ENCODE measurements at regions of chr2 and their contacts with region 1.

Region 1: DNA sequence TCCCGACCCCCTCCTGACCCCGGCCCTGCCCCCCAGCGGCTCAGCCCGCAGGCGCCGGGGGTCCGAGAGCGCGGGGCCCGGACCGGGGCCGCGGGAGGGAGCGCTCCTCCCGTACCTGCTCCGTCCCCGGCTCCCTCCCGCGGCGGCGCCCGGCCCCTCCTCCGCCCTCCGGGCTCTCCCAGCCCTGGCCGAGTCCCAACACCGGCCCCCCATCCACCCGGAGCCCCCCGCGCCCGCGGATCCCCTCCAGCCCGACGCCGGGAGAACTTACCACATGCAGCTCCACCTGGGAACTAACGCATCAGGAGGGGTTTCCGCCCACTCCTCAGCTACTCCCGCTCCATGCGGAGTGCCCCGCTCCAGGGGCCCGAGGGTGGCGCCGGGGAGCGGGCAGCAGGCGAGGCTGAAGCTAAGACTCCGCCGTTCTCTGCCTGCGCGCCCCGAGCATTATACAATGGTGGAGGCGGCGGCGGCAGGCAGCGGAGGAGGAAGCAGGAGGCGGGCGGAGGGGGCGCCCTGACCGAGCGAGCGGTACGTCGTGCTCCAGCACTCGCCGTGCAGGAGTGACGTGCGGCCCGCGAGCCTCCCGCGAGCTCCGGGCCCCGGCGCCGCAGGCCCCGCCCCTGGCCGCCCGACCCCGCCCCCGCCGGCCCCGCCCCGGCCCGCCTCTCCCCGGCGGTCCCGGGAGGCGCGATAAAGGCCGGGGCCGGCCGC is at the start of gene SERTAD2:
- DNase-seq: no peak
- ATAC-seq: peak; percentile 70
- H3K4me3 ChIP-seq: peak within 1 kb of the TSS; percentile 95
- H3K27ac ChIP-seq: peak within 1 kb of the TSS; percentile 81
- H3K4me1 ChIP-seq: peaks cover 51% of the 10 kb centered on the region
- H3K27me3 ChIP-seq: no peaks in the 10 kb centered on the region
- CTCF ChIP-seq: 0 out of 6 replicates have a peak, but pooled peaks of 1 of the 3 experiments have one; percentile 6
- EP300 ChIP-seq: no peak
- POLR2A ChIP-seq: peak; percentile 90
- RAD21 ChIP-seq: 0 out of 2 replicates have a peak, but pooled peaks have one; percentile 19
- polyA plus RNA-seq, gene SERTAD2: 7.9 TPM

Region 2: GRCh38 chr2:64463781-64464180 is 189.7 kb before region 1 on chr2:
- CTCF ChIA-PET with region 1: no interaction called
- POLR2A ChIA-PET with region 1: no interaction called
- RAD21 ChIA-PET with region 1: no interaction called
- SMC1A ChIA-PET with region 1: no interaction called
- in situ Hi-C with region 1: no loop called
- intact Hi-C with region 1: no loop called
- DNase-seq: no peak
- ATAC-seq: no peak
- H3K4me3 ChIP-seq: no peak overlapping the region
- H3K27ac ChIP-seq: no peak overlapping the region
- H3K4me1 ChIP-seq: no peaks in the 10 kb centered on the region
- H3K27me3 ChIP-seq: no peaks in the 10 kb centered on the region
- CTCF ChIP-seq: no peak
- EP300 ChIP-seq: no peak
- POLR2A ChIP-seq: no peak
- RAD21 ChIP-seq: no peak

Region 3: DNA sequence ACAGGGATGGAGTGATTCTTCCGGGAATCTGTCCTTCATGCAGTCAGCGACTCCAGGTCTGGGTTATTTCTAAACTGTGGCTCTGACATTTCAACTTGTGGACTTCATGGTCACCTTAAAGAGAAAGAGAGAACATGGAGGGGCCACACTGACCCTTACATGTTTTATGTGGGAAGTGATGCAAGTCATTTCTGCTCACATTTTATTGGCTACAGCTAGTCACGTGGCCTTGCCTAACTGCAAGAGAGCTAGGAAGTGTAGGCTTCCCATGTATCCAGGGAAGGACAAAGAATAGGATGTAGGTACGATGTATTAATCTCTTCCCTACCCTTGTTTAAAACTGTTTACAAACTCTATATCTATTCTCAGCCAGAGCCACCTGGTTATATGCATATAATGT is 159.7 kb before region 1 on chr2:
- CTCF ChIA-PET with region 1: no interaction called
- POLR2A ChIA-PET with region 1: no interaction called
- RAD21 ChIA-PET with region 1: no interaction called
- SMC1A ChIA-PET with region 1: no interaction called
- in situ Hi-C with region 1: no loop called
- intact Hi-C with region 1: no loop called
- DNase-seq: no peak
- ATAC-seq: no peak
- H3K4me3 ChIP-seq: no peak overlapping the region
- H3K27ac ChIP-seq: no peak overlapping the region
- H3K4me1 ChIP-seq: no peaks in the 10 kb centered on the region; the same call in 1 of the 2 replicates
- H3K27me3 ChIP-seq: peaks cover 0 to 1% of the 10 kb centered on the region in 2 experiments; a peak in 3 of 4 replicates
- CTCF ChIP-seq: no peak
- EP300 ChIP-seq: no peak
- POLR2A ChIP-seq: no peak
- RAD21 ChIP-seq: no peak

Region 4: DNA sequence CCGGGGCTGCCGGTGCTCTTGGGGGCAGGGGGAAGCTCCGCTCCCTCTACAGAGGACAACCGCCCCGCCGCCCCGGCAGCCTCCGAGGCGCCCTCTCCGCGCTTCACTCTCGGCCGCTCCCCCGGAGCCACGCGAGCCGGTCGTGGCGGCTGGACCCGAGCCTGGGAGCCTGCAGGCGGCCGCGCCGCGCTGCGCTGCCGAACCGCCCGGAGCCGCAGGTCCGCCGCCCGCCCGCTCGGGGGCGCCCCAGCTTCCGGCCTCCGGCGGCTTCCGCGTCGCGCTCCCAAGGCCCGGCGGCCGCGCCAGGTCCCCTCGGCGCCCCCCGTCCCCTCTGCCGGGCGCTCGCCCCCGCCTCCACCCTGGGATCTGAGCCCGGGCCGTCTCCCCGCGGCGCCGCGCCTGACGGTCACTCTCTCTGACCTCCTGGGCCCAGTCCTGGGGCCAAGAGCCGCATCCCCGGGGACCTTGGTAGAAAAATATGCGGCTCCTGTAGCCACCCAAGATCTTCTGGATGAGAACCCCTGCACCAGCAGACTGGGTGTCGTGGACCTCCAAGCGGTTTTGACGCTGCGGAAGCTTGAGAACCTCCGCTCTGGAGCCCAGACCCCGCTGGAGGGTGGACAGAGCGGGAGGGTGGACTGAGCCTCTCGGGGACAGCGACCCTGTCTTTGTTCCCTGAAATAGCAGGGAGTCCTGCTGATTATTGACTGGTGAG is 44.1 kb before region 1 on chr2:
- CTCF ChIA-PET with region 1: interaction called, 16 read pairs
- POLR2A ChIA-PET with region 1: interaction called, 20 read pairs
- RAD21 ChIA-PET with region 1: interaction called, 73 read pairs
- SMC1A ChIA-PET with region 1: interaction called, 8 read pairs
- in situ Hi-C with region 1: no loop called
- intact Hi-C with region 1: no loop called
- DNase-seq: no peak
- ATAC-seq: peak; percentile 62
- H3K4me3 ChIP-seq: peak overlapping the region; percentile 68
- H3K27ac ChIP-seq: peak overlapping the region; percentile 14; the same call in 1 of the 2 replicates
- H3K4me1 ChIP-seq: peaks cover 38% of the 10 kb centered on the region
- H3K27me3 ChIP-seq: no peaks in the 10 kb centered on the region
- CTCF ChIP-seq: peak; percentile 30 to 63 (median 33); a peak in 4 of 6 replicates
- EP300 ChIP-seq: no peak
- POLR2A ChIP-seq: peak; percentile 70
- RAD21 ChIP-seq: peak; percentile 42

Region 5: GRCh38 chr2:64688909-64689308 is 35.4 kb after region 1 on chr2:
- CTCF ChIA-PET with region 1: interaction called, 4 read pairs
- POLR2A ChIA-PET with region 1: interaction called, 14 read pairs
- RAD21 ChIA-PET with region 1: interaction called, 3 read pairs
- SMC1A ChIA-PET with region 1: interaction called, 262 read pairs
- in situ Hi-C with region 1: no loop called
- intact Hi-C with region 1: no loop called
- DNase-seq: no peak
- ATAC-seq: no peak
- H3K4me3 ChIP-seq: no peak overlapping the region
- H3K27ac ChIP-seq: no peak overlapping the region
- H3K4me1 ChIP-seq: no peaks in the 10 kb centered on the region
- H3K27me3 ChIP-seq: no peaks in the 10 kb centered on the region
- CTCF ChIP-seq: no peak
- EP300 ChIP-seq: no peak
- POLR2A ChIP-seq: no peak
- RAD21 ChIP-seq: no peak

Region 6: GRCh38 chr2:64745562-64745961 is 92.1 kb after region 1 on chr2:
- CTCF ChIA-PET with region 1: interaction called, 153 read pairs
- POLR2A ChIA-PET with region 1: interaction called, 195 read pairs
- RAD21 ChIA-PET with region 1: interaction called, 514 read pairs
- SMC1A ChIA-PET with region 1: interaction called, 945 read pairs
- in situ Hi-C with region 1: no loop called
- intact Hi-C with region 1: no loop called
- DNase-seq: no peak
- ATAC-seq: peak; percentile 39
- H3K4me3 ChIP-seq: peak overlapping the region; percentile 46
- H3K27ac ChIP-seq: peak overlapping the region; percentile 10
- H3K4me1 ChIP-seq: no peaks in the 10 kb centered on the region
- H3K27me3 ChIP-seq: no peaks in the 10 kb centered on the region
- CTCF ChIP-seq: no peak
- EP300 ChIP-seq: no peak
- POLR2A ChIP-seq: no peak
- RAD21 ChIP-seq: no peak

Region 7: DNA sequence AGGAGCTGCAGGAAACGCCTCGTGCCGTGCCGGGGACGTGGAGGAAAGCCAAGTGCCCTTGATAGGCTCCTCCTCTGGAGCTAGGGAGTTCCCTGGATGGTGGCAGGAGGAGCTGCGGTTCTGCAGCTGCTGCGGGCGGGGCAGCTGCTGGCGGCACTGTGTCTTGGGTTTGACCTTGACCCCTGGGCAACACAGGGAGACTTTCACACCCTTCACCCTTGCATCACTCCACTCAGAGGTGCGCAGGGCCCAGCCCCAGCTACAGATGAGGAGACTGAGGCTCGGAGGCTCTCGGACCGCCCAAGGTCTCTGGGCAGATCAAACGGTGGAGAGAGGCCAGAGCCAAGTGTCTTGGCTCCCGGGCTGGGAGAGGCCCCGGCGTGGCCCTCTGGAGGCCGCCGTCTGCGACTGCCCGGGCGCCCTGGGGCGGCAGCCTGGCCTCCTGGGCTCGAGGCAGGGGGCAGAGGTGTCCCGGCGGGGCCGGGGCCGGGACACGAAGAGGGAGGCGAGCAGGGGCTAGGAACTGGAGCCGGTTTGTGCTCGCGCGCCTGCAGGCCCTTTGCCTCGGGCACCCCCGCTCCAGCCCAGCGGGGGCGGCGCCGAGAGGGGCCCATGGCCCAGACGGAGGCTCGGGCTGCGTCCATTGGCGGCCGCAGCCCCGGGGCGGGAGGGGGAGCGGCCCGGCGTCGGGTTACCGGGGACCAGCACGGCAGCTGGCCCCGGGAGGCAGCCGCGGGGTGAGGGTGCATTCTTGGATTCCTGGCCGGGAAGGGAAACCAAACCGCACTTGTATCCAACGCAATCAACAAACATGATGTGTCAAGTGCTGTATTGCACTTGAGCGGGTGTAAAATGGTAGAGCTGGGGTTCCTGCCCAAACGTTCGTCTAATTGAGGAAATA is 206.1 kb after region 1 on chr2:
- CTCF ChIA-PET with region 1: interaction called, 9 read pairs
- POLR2A ChIA-PET with region 1: interaction called, 19 read pairs
- RAD21 ChIA-PET with region 1: interaction called, 88 read pairs
- SMC1A ChIA-PET with region 1: interaction called, 39 read pairs
- in situ Hi-C with region 1: no loop called
- intact Hi-C with region 1: no loop called
- DNase-seq: no peak
- ATAC-seq: peak; percentile 53
- H3K4me3 ChIP-seq: peak overlapping the region; percentile 65
- H3K27ac ChIP-seq: peak overlapping the region; percentile 91
- H3K4me1 ChIP-seq: peaks cover 54% of the 10 kb centered on the region
- H3K27me3 ChIP-seq: no peaks in the 10 kb centered on the region
- CTCF ChIP-seq: no peak
- EP300 ChIP-seq: no peak
- POLR2A ChIP-seq: peak; percentile 40
- RAD21 ChIP-seq: no peak

Region 8: GRCh38 chr2:64937687-64938491 is 284.4 kb after region 1 on chr2:
- CTCF ChIA-PET with region 1: no interaction called
- POLR2A ChIA-PET with region 1: interaction called, 6 read pairs
- RAD21 ChIA-PET with region 1: interaction called, 14 read pairs
- SMC1A ChIA-PET with region 1: interaction called, 3 read pairs
- in situ Hi-C with region 1: no loop called
- intact Hi-C with region 1: loop called (anchors 2 kb)
- DNase-seq: peak; percentile 77
- ATAC-seq: peak; percentile 70
- H3K4me3 ChIP-seq: peak overlapping the region; percentile 76
- H3K27ac ChIP-seq: peak overlapping the region; percentile 92
- H3K4me1 ChIP-seq: peaks cover 67% of the 10 kb centered on the region
- H3K27me3 ChIP-seq: no peaks in the 10 kb centered on the region
- CTCF ChIP-seq: no peak
- EP300 ChIP-seq: peak in 1 of 2 experiments; percentile 12; a peak in 1 of 4 replicates
- POLR2A ChIP-seq: peak; percentile 60
- RAD21 ChIP-seq: no peak

Region 9: DNA sequence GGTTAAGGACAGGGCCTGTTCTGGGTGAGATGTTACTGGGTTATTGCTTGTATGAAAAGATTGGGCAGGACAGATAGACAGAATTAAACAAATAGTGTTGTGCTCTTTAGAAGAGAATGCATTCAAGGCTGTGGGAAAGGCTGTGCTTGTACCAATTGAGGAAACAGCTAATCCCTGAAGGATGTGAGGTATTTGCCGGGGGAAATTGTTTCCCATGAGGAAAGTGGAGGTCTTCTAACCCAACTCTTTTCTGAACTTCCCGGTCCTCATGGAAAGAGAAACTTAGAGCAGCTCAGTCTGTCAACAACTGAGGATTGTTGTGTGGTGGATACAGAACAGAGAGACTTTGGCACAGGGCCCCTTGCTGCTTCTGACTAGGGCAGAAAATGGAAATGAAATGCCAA is 345.2 kb after region 1 on chr2:
- CTCF ChIA-PET with region 1: no interaction called
- POLR2A ChIA-PET with region 1: no interaction called
- RAD21 ChIA-PET with region 1: no interaction called
- SMC1A ChIA-PET with region 1: no interaction called
- in situ Hi-C with region 1: no loop called
- intact Hi-C with region 1: no loop called
- DNase-seq: no peak
- ATAC-seq: no peak
- H3K4me3 ChIP-seq: no peak overlapping the region
- H3K27ac ChIP-seq: no peak overlapping the region
- H3K4me1 ChIP-seq: no peaks in the 10 kb centered on the region
- H3K27me3 ChIP-seq: no peaks in the 10 kb centered on the region
- CTCF ChIP-seq: no peak
- EP300 ChIP-seq: no peak
- POLR2A ChIP-seq: no peak
- RAD21 ChIP-seq: no peak

Measured in GM12878 (cell line).